ENCODE measurements at regions of chr14 and their contacts with region 1.

Region 1: GRCh38 chr14:23379366-23380196 is 2.7 kb downstream of the CMTM5 start:
- DNase-seq: peak; percentile 67
- ATAC-seq: peak; percentile 93
- H3K4me3 Mint-ChIP-seq: no peak overlapping the region
- H3K27ac Mint-ChIP-seq: no peak overlapping the region
- H3K4me1 Mint-ChIP-seq: no peaks in the 10 kb centered on the region
- H3K27me3 Mint-ChIP-seq: no peaks in the 10 kb centered on the region
- CTCF ChIP-seq: peak; percentile 91

Region 2: DNA sequence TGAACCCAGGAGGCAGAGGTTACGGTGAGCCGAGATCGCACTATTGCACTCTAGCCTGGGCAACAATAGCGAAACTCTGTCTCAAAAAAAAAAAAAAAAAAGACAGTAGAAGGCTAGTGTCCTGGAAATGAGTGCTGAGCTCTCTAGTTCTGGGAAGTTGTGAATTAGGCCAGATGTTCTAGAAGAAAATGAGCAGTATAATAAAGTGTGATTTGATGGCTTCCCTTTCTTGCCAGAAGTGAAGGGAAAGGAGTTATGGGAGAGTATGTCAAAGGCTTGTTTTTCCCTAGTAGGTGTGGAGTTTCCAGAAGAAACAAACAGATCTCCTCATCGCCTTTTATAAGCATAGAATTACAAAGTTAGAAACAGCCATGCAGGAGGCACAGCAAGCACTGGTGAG is 121.3 kb before region 1 on chr14:
- CTCF ChIA-PET with region 1: interaction called, 29 read pairs
- POLR2A ChIA-PET with region 1: no interaction called
- intact Hi-C with region 1: loop called (anchors 10 kb)
- DNase-seq: no peak
- ATAC-seq: no peak
- H3K4me3 Mint-ChIP-seq: no peak overlapping the region
- H3K27ac Mint-ChIP-seq: no peak overlapping the region
- H3K4me1 Mint-ChIP-seq: no peaks in the 10 kb centered on the region
- H3K27me3 Mint-ChIP-seq: peaks cover 17% of the 10 kb centered on the region
- CTCF ChIP-seq: no peak

Region 3: DNA sequence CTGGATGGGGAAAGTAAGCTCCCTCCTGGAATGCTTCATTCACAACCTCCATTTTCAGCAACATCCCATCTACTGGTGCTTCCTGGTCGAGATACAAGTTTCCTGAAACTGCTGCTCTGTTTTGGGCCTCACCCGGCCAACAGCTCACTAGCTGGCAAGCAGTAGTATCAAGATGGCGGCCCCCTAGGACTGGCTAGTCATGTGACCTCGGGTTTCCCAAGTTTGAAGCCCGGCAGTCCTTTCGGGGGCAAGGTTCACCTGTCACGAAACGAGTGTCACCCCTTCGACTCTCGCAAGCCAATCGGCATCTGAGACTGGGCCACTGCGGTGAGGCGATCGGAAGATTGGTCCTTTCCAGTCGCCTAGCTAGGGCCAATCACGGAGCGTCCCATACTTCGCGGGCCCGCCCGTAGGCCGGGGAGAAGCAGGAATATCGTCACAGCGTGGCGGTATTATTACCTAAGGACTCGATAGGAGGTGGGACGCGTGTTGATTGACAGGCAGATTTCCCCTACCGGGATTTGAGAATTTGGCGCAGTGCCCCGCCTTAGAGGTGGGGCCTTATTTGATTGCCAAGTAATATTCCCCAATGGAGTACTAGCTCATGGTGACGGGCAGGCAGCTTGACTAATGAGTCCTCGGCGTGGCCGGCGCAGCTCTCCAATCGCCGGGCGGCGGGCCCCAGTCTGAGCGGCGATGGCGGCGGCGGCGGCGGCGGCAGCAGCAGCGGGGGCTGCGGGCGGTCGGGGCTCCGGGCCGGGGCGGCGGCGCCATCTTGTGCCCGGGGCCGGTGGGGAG is 58.6 kb before region 1 on chr14 and contains the start of gene PABPN1:
- CTCF ChIA-PET with region 1: interaction called, 86 read pairs
- POLR2A ChIA-PET with region 1: interaction called, 11 read pairs
- intact Hi-C with region 1: no loop called
- DNase-seq: peak; percentile 99
- ATAC-seq: peak; percentile 88
- H3K4me3 Mint-ChIP-seq: peak within 1 kb of the TSS; percentile 95
- H3K27ac Mint-ChIP-seq: peak within 1 kb of the TSS; percentile 95
- H3K4me1 Mint-ChIP-seq: peaks cover 22% of the 10 kb centered on the region
- H3K27me3 Mint-ChIP-seq: no peaks in the 10 kb centered on the region
- CTCF ChIP-seq: no peak
- total RNA-seq, gene PABPN1: 258 to 260 TPM

Region 4: GRCh38 chr14:23335623-23336022 is 44.0 kb before region 1 on chr14:
- CTCF ChIA-PET with region 1: interaction called, 86 read pairs
- POLR2A ChIA-PET with region 1: no interaction called
- intact Hi-C with region 1: no loop called
- DNase-seq: no peak
- ATAC-seq: no peak
- H3K4me3 Mint-ChIP-seq: no peak overlapping the region
- H3K27ac Mint-ChIP-seq: no peak overlapping the region
- H3K4me1 Mint-ChIP-seq: no peaks in the 10 kb centered on the region
- H3K27me3 Mint-ChIP-seq: peaks cover 20% of the 10 kb centered on the region
- CTCF ChIP-seq: no peak

Region 5: DNA sequence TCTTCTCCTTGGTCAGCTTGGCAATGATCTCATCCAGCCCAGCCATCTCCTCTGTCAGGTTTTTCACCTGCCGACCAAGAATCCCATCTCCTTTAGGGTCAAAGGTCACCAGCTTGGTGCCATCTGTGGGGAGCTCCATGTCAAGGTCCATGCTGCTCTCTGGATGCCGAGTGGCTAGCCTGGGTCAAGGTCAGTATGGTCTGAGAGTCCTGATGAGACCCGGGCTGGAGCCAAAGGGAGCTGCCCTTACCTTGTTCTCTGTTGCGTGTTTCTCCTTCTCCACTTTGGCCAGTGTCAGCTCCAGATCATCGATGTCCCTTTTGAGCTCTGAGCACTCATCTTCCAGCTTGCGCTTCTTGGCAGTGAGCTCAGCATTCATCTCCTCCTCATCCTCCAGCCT is 44.1 kb after region 1 on chr14:
- CTCF ChIA-PET with region 1: interaction called, 10 read pairs
- POLR2A ChIA-PET with region 1: no interaction called
- intact Hi-C with region 1: no loop called
- DNase-seq: no peak
- ATAC-seq: no peak
- H3K4me3 Mint-ChIP-seq: no peak overlapping the region
- H3K27ac Mint-ChIP-seq: no peak overlapping the region
- H3K4me1 Mint-ChIP-seq: peaks cover 14% of the 10 kb centered on the region
- H3K27me3 Mint-ChIP-seq: no peaks in the 10 kb centered on the region
- CTCF ChIP-seq: no peak